Naive thymus-derived CD4-positive, alpha-beta T cell (primary cell): ENCODE measurements at regions of chr20 and their contacts with region 1.

Region 1: DNA sequence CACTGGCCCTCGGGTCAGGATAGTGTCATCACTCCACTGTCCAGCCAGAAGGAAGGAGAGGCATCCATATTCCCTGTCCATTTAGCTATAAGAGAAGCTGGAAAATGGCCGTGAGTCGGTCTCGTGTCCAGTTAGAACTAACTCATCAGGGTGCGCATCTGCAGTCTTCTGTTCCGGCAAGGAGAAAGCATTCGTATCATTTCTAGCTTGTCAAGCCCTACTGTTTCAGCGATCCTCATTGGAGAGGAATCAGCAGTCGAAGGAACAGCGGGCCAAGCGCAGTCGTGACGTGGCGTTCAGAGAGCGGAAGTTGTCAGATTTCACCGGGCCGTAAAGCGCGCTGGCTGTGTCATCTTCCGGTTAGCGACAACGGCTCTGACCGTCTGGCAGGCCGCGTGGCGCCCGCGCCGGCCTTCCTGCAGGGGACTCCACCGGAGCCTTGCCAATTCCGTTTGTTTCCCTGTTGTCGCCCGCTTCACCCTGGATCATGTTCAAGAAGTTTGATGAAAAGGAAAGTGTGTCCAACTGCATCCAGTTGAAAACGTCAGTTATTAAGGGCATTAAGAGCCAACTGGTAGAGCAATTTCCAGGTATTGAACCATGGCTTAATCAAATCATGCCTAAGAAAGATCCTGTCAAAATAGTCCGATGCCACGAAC is 32.9 kb downstream of the HM13 start:
- DNase-seq: peak; percentile 56 to 84 (median 80)
- ATAC-seq: peak; percentile 92
- H3K4me3 ChIP-seq: peak overlapping the region; percentile 85
- H3K4me3 Mint-ChIP-seq: peak overlapping the region; percentile 86 to 99 (median 94)
- H3K27ac ChIP-seq: peak overlapping the region; percentile 87
- H3K27ac Mint-ChIP-seq: peak overlapping the region; percentile 94 to 100 (median 98)
- H3K4me1 ChIP-seq: peaks cover 0 to 6% of the 10 kb centered on the region in 2 donors
- H3K4me1 Mint-ChIP-seq: peaks cover 8 to 36% (median 28%) of the 10 kb centered on the region in 7 donors
- H3K27me3 ChIP-seq: no peaks in the 10 kb centered on the region
- H3K27me3 Mint-ChIP-seq: no peaks in the 10 kb centered on the region

Region 2: GRCh38 chr20:31560094-31560899 is 13.2 kb after region 1 on chr20:
- CTCF ChIA-PET with region 1: interaction called, 6 read pairs
- POLR2A ChIA-PET with region 1: interaction called, 3 read pairs
- intact Hi-C with region 1: loop called in 1 of 2 experiments (anchors 1 kb)
- DNase-seq: peak; percentile 62 to 81 (median 75)
- ATAC-seq: peak; percentile 87
- H3K4me3 ChIP-seq: no peak overlapping the region
- H3K4me3 Mint-ChIP-seq: no peak overlapping the region
- H3K27ac ChIP-seq: no peak overlapping the region
- H3K27ac Mint-ChIP-seq: peak overlapping the region in 6 of 9 donors; percentile 37 to 81 (median 66)
- H3K4me1 ChIP-seq: peaks cover 0 to 6% of the 10 kb centered on the region in 2 donors
- H3K4me1 Mint-ChIP-seq: peaks cover 3 to 20% (median 10%) of the 10 kb centered on the region in 7 donors
- H3K27me3 ChIP-seq: no peaks in the 10 kb centered on the region
- H3K27me3 Mint-ChIP-seq: no peaks in the 10 kb centered on the region

Region 3: DNA sequence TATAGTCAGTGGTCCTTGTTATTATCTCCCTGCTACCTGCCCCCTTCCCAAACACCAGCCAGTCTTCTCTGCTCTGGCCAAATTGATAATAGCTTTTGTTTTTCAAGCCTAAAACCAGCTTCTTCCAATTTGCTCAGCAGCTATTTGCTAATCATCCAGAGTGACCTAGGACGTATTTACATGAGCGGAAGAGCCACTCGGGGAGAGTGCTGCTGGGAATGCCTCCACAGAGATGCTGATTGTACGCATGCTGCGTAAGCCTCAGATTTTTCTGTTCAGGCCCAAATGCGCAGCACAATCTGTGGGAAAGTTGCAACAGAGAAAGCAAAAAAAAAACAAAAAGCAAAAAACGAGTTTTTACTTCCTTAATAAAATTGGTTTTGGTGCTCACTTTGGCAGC is 33.6 kb after region 1 on chr20:
- CTCF ChIA-PET with region 1: no interaction called
- POLR2A ChIA-PET with region 1: no interaction called
- intact Hi-C with region 1: no loop called
- DNase-seq: no peak
- ATAC-seq: no peak
- H3K4me3 ChIP-seq: no peak overlapping the region
- H3K4me3 Mint-ChIP-seq: no peak overlapping the region
- H3K27ac ChIP-seq: no peak overlapping the region
- H3K27ac Mint-ChIP-seq: no peak overlapping the region
- H3K4me1 ChIP-seq: no peaks in the 10 kb centered on the region
- H3K4me1 Mint-ChIP-seq: peaks cover 0 to 20% (median 9%) of the 10 kb centered on the region in 7 donors
- H3K27me3 ChIP-seq: no peaks in the 10 kb centered on the region
- H3K27me3 Mint-ChIP-seq: peaks cover 0 to 6% (median 0%) of the 10 kb centered on the region in 5 donors